T-cell (primary cell): ENCODE measurements at regions of chr14 and their contacts with region 1.

Region 1: GRCh38 chr14:69129264-69129880 is 23.5 kb downstream of the DCAF5 start:
- DNase-seq: peak; percentile 35 to 91 (median 68)
- ATAC-seq: peak; percentile 81 to 90 (median 86)
- H3K4me3 ChIP-seq: no peak overlapping the region
- H3K4me3 Mint-ChIP-seq: no peak overlapping the region
- H3K27ac ChIP-seq: peak overlapping the region; percentile 50
- H3K27ac Mint-ChIP-seq: peak overlapping the region; percentile 53 to 68
- H3K4me1 ChIP-seq: peaks cover 7 to 12% of the 10 kb centered on the region in 2 experiments
- H3K4me1 Mint-ChIP-seq: peaks cover 82 to 83% (median 82%) of the 10 kb centered on the region in 3 donors
- H3K27me3 ChIP-seq: no peaks in the 10 kb centered on the region
- H3K27me3 Mint-ChIP-seq: no peaks in the 10 kb centered on the region

Region 2: DNA sequence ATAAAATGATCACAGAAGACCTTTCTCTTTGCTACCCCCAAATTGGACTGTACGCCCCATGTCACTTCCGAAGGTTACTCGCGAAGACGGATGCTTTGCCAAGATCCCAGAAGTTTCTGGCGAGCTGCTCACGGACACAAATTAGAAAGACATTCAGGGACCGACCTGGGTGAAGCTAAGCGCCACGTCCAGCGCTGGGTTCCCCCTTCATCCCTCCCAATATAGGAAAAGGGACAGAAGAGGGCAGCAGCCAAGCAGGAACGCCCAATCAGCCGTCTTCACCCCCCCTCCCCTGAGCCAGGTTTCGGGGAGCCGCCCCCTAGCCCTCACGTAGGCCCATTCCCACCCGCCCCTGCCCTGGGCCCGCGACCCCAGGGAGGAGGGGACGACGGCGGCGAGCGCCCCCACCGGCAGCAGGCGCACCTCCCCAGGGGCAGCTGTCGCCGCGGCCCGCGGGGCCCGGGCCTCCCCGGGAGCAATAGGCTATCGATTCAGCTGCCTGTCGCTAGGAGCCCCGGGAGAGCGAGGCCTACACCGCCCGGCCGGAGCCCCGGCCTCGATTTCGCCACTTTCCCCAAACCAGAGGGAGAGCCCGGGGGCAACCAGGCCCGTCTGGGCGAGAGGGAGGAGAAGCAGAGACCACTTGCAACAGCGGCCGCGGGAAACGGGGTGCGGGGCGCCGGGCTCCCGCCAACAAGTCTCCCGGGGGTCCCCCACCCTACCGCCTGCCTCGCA is 22.1 kb after region 1 on chr14:
- CTCF ChIA-PET with region 1: interaction called, 3 to 16 read pairs
- POLR2A ChIA-PET with region 1: interaction called, 4 to 6 read pairs
- DNase-seq: peak; percentile 48 to 84 (median 68)
- ATAC-seq: peak; percentile 42 to 53 (median 48)
- H3K4me3 ChIP-seq: peak overlapping the region; percentile 75 to 97
- H3K4me3 Mint-ChIP-seq: peak overlapping the region; percentile 86 to 93 (median 89)
- H3K27ac ChIP-seq: peak overlapping the region; percentile 64
- H3K27ac Mint-ChIP-seq: peak overlapping the region; percentile 90 to 92
- H3K4me1 ChIP-seq: peaks cover 20 to 23% of the 10 kb centered on the region in 2 experiments
- H3K4me1 Mint-ChIP-seq: peaks cover 52 to 56% (median 53%) of the 10 kb centered on the region in 3 donors
- H3K27me3 ChIP-seq: no peaks in the 10 kb centered on the region
- H3K27me3 Mint-ChIP-seq: no peaks in the 10 kb centered on the region

Region 3: GRCh38 chr14:69204753-69205152 is 75.4 kb after region 1 on chr14:
- CTCF ChIA-PET with region 1: interaction called in 1 of 2 experiments, 3 read pairs
- POLR2A ChIA-PET with region 1: interaction called in 1 of 2 experiments, 11 read pairs
- DNase-seq: no peak
- ATAC-seq: no peak
- H3K4me3 ChIP-seq: no peak overlapping the region
- H3K4me3 Mint-ChIP-seq: no peak overlapping the region
- H3K27ac ChIP-seq: no peak overlapping the region
- H3K27ac Mint-ChIP-seq: no peak overlapping the region
- H3K4me1 ChIP-seq: no peaks in the 10 kb centered on the region
- H3K4me1 Mint-ChIP-seq: peaks cover 0 to 2% (median 0%) of the 10 kb centered on the region in 3 donors
- H3K27me3 ChIP-seq: no peaks in the 10 kb centered on the region
- H3K27me3 Mint-ChIP-seq: no peaks in the 10 kb centered on the region

Region 4: GRCh38 chr14:69242311-69243224 is 113.2 kb after region 1 on chr14:
- CTCF ChIA-PET with region 1: interaction called, 3 to 12 read pairs
- POLR2A ChIA-PET with region 1: interaction called in 1 of 2 experiments, 5 read pairs
- DNase-seq: peak in 31 of 35 experiments; percentile 9 to 72 (median 42)
- ATAC-seq: peak in 3 of 4 experiments; percentile 53 to 69 (median 58)
- H3K4me3 ChIP-seq: no peak overlapping the region
- H3K4me3 Mint-ChIP-seq: no peak overlapping the region
- H3K27ac ChIP-seq: no peak overlapping the region
- H3K27ac Mint-ChIP-seq: no peak overlapping the region
- H3K4me1 ChIP-seq: no peaks in the 10 kb centered on the region
- H3K4me1 Mint-ChIP-seq: peaks cover 0 to 3% (median 3%) of the 10 kb centered on the region in 3 donors
- H3K27me3 ChIP-seq: no peaks in the 10 kb centered on the region
- H3K27me3 Mint-ChIP-seq: no peaks in the 10 kb centered on the region

Region 5: DNA sequence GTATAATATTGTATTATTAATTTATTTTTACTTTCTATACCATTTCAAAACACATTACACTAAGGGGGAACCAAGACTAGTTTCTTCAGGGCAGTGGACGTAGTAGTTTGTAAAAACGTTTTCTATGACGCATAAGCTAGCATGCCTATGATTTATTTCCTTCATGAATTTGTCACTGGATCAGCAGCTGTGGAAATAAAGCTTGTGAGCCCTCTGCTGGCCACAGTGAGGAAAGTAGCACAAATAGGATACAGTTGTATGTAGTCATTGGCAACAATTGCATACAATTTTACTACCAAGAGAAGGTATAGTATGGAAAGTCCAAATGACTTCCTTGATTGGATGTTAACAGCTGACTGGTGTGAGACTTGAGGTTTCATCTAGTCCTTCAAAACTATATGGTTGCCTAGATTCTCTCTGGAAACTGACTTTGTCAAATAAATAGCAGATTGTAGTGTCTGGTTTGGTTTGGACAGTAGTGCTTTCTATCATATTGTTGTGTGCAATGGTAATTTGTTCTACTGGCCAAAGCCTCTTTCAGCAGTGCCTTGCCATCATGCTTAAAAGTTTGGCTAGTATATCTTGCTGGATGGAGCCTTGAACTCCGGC is 330.8 kb after region 1 on chr14:
- CTCF ChIA-PET with region 1: interaction called in 1 of 2 experiments, 10 read pairs
- POLR2A ChIA-PET with region 1: no interaction called
- DNase-seq: peak in 31 of 35 experiments; percentile 4 to 68 (median 33)
- ATAC-seq: peak; percentile 47 to 71 (median 63)
- H3K4me3 ChIP-seq: no peak overlapping the region
- H3K4me3 Mint-ChIP-seq: no peak overlapping the region
- H3K27ac ChIP-seq: no peak overlapping the region
- H3K27ac Mint-ChIP-seq: no peak overlapping the region
- H3K4me1 ChIP-seq: no peaks in the 10 kb centered on the region
- H3K4me1 Mint-ChIP-seq: no peaks in the 10 kb centered on the region
- H3K27me3 ChIP-seq: no peaks in the 10 kb centered on the region
- H3K27me3 Mint-ChIP-seq: no peaks in the 10 kb centered on the region